Dendritic cell treated with granulocyte-macrophage colony-stimulating factor and Interleukin-4, amounts not matched to agents 40 ng/mL and 50 ng/mL, for 4 days (primary cell): ENCODE measurements at regions of chr2 and their contacts with region 1.

Region 1: GRCh38 chr2:61538200-61538919 is at the start of gene XPO1:
- H3K4me3 Mint-ChIP-seq: peak within 1 kb of the TSS; percentile 98
- H3K27ac Mint-ChIP-seq: peak within 1 kb of the TSS; percentile 98
- H3K4me1 Mint-ChIP-seq: peaks cover 33% of the 10 kb centered on the region
- H3K27me3 Mint-ChIP-seq: no peaks in the 10 kb centered on the region

Region 2: DNA sequence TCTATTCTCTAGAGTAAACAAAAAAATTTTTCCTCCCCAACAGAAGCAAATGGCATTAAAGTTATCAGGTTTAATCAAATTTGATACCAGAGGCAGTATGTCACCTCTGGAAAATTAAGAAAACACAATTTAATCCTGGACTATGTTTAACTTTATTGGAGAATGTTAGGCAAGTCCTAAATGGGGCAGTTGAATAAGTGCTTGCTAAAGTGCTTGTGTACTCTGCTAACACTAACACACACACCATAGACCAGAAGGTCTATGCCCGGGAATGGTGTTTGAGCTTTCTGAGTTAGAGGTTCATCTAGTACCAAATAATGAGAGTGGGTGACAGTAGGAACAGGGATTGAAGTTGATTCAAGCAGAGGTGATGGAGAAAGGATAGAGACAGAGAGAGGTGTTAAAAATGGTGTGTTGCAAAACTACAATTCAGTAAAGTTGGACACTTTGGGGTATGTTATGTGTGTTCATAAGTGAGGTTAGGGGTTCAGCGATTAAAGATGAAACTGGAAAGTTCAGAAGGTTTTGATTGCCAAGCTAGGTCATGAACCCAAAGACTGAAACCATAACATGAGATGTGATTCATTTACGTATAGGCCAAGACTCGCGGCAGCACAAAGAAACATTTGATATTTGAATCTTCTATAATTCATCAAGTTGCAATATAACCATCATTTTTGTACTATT is 561.3 kb before region 1 on chr2:
- intact Hi-C with region 1: no loop called
- H3K4me3 Mint-ChIP-seq: no peak overlapping the region
- H3K27ac Mint-ChIP-seq: no peak overlapping the region
- H3K4me1 Mint-ChIP-seq: peaks cover 21% of the 10 kb centered on the region
- H3K27me3 Mint-ChIP-seq: no peaks in the 10 kb centered on the region

Region 3: GRCh38 chr2:61658841-61659780 is 120.8 kb after region 1 on chr2:
- intact Hi-C with region 1: loop called (anchors 10 kb)
- H3K4me3 Mint-ChIP-seq: no peak overlapping the region
- H3K27ac Mint-ChIP-seq: no peak overlapping the region
- H3K4me1 Mint-ChIP-seq: no peaks in the 10 kb centered on the region
- H3K27me3 Mint-ChIP-seq: no peaks in the 10 kb centered on the region

Region 4: DNA sequence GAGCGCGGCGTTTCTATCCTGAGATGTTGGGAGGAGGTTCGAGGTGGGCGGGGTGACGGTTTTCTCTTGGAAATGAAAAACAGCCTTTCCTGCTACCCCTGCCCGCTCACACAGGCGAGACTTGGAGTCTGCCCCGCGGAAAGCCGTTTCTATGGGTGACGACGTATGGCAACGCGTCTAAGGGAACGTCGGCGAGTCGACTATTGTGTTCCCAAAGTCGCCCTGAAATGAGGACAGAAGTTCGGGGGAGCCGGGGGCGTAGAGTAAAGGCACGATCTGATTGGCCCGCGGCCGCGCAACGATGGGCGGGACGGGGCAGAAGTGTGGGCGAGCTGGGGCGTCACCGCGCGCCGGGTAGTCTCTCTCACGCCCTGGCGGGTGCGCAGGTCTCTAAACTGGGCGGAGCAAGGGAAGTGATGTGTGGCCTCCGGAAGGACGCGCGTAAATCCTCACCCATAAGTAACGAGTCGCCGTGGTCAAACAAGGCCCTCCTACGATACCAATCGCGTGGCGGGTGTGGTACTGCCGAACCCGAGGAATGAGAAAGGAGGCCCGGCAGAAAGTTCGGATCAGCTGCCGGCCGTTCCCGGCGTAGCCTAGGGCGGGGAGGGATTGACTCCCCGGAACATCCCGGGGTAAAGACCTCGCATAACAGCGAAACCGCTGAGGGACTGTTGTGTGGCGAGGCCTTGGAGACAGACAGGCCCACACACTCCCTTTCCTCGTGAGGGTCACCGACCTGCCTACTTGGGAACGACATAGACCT is 225.9 kb after region 1 on chr2:
- intact Hi-C with region 1: loop called (anchors 1 kb)
- H3K4me3 Mint-ChIP-seq: peak overlapping the region; percentile 89
- H3K27ac Mint-ChIP-seq: peak overlapping the region; percentile 99
- H3K4me1 Mint-ChIP-seq: no peaks in the 10 kb centered on the region
- H3K27me3 Mint-ChIP-seq: no peaks in the 10 kb centered on the region

Region 5: GRCh38 chr2:61888267-61889055 is 350.1 kb after region 1 on chr2 and contains the start of gene CCT4:
- intact Hi-C with region 1: loop called (anchors 5 kb)
- H3K4me3 Mint-ChIP-seq: peak within 1 kb of the TSS; percentile 94
- H3K27ac Mint-ChIP-seq: peak within 1 kb of the TSS; percentile 97
- H3K4me1 Mint-ChIP-seq: peaks cover 19% of the 10 kb centered on the region
- H3K27me3 Mint-ChIP-seq: no peaks in the 10 kb centered on the region

Region 6: DNA sequence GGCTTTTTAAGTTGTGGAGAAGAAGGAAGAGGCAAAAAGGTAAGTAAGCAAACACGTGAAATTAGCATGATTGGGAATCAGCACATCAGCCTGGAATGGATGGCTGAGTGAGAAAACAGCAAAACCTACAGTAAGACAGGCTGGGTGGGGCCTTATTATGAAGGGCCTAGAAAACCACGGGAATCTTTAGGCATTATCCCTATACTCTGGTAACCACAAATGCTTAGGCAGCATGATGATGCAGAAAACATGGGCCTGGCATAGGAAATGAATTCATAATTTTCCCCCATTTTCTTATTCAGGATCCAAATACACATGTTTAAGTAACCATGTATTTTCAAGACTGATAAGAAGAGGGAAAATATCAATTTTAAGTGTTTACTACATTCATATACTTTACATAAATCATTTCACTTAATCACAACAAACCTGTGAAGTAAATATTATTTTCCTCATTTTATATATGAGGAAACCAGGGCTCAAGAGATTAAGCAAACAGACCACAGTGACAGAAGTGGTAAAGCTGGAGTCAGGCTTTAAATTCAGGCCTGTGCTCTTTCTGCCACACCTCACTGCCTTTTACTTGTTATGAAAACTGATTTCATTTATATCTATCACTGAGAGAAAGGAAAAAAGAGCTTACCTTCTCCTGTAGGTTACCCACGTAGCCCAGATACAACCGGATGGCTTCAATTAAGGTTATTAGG is 963.6 kb after region 1 on chr2:
- intact Hi-C with region 1: no loop called
- H3K4me3 Mint-ChIP-seq: no peak overlapping the region
- H3K27ac Mint-ChIP-seq: no peak overlapping the region
- H3K4me1 Mint-ChIP-seq: peaks cover 16% of the 10 kb centered on the region
- H3K27me3 Mint-ChIP-seq: no peaks in the 10 kb centered on the region